Heart right ventricle (tissue), 16 donors: ENCODE measurements at regions of chr10 and their contacts with region 1.

Region 1: GRCh38 chr10:33594475-33594874 is 260.0 kb upstream of the NRP1 start:
- DNase-seq: no peak
- ATAC-seq: no peak
- H3K4me3 ChIP-seq: no peak overlapping the region
- H3K27ac ChIP-seq: no peak overlapping the region
- H3K4me1 ChIP-seq: no peaks in the 10 kb centered on the region
- H3K27me3 ChIP-seq: no peaks in the 10 kb centered on the region
- CTCF ChIP-seq: no peak

Region 2: DNA sequence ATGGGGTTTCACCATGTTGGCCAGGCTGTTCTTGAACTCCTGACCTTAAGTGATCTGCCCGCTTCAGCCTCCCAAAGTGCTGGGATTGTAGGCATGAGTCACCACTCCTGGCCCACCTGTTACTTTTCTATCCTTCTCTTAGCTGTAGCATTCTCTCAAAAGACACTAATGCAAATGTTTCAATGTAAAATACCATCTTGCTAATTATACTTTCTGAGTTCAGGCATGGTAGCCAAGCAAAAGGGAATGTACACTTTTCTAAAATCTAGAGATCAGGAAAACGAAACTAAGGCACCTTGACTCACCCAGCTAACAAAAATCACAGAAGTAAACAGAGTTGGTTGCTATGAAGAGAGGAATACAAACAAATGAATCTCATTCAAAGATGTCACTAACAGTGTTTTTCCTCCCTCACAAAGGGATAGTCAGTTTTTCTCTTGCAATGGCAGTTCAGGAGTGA is 141.0 kb after region 1 on chr10:
- intact Hi-C with region 1: no loop called
- DNase-seq: no peak
- ATAC-seq: no peak
- H3K4me3 ChIP-seq: no peak overlapping the region
- H3K27ac ChIP-seq: no peak overlapping the region
- H3K4me1 ChIP-seq: peaks cover 0 to 13% (median 3%) of the 10 kb centered on the region in 9 donors
- H3K27me3 ChIP-seq: no peaks in the 10 kb centered on the region
- CTCF ChIP-seq: no peak

Region 3: GRCh38 chr10:35079763-35080162 is 1485.3 kb after region 1 on chr10:
- intact Hi-C with region 1: loop called in 1 of 10 experiments (anchors 10 kb)
- DNase-seq: no peak
- ATAC-seq: no peak
- H3K4me3 ChIP-seq: no peak overlapping the region
- H3K27ac ChIP-seq: no peak overlapping the region
- H3K4me1 ChIP-seq: no peaks in the 10 kb centered on the region
- H3K27me3 ChIP-seq: no peaks in the 10 kb centered on the region
- CTCF ChIP-seq: no peak